ENCODE measurements at regions of chr17 and their contacts with region 1.

Region 1: GRCh38 chr17:27649929-27650328 is 18.9 kb downstream of the LGALS9 start:
- DNase-seq: no peak
- H3K4me3 ChIP-seq: no peak overlapping the region
- H3K4me1 ChIP-seq: no peaks in the 10 kb centered on the region
- H3K27me3 ChIP-seq: no peaks in the 10 kb centered on the region

Region 2: GRCh38 chr17:27236717-27237315 is 413.1 kb before region 1 on chr17:
- in situ Hi-C with region 1: loop called (anchors 10 kb)
- DNase-seq: peak; percentile 52 to 84
- H3K4me3 ChIP-seq: no peak overlapping the region
- H3K4me1 ChIP-seq: no peaks in the 10 kb centered on the region
- H3K27me3 ChIP-seq: no peaks in the 10 kb centered on the region

Measured in HAP-1 (cell line).